Activated B cell treated with CpG ODN at 0.5 μM for 24 hours (primary cell): ENCODE measurements at regions of chr14 and their contacts with region 1.

Region 1: DNA sequence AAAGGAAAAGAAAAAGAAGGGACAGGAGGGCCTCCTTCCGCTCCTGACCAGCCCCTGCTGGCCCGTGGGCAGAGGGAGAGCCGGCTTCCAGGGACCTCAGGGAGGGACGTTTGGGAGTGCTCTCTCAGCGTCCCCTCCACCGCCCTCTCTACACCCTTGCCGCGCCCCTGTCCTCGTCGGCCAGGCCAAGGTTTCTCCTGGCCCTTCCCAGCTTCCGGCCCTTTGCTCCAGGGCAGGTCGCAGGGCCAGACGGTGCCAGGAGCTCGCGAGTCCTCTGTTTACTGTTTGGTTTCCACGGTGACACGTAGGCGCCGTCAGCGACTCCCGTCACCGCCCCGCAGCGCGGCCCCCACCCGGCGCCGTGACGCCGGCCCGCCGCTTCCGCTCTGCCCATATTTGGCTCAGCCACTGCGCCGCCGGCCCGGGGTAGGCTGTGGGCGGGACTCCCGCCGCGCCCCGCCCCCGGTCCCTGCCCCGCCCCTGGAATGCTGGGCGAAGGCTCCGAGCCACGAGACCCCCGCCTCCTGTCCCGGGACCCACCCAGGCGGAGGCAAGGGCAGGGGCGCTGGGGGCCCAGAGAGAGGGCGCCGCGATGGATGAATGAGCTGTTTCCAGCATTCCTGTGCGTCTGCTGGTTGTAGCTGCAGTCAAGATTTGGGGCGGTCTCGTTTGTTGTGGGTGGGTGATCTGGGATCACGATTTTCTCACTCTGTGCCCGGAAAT is 15.5 kb downstream of the FOS start:
- DNase-seq: peak; percentile 96
- ATAC-seq: peak; percentile 85
- H3K4me3 Mint-ChIP-seq: peak overlapping the region; percentile 95
- H3K27ac Mint-ChIP-seq: peak overlapping the region; percentile 88
- H3K4me1 Mint-ChIP-seq: peaks cover 21% of the 10 kb centered on the region
- H3K27me3 Mint-ChIP-seq: peaks cover 6% of the 10 kb centered on the region
- CTCF ChIP-seq: no peak

Region 2: GRCh38 chr14:74302634-74303577 is 991.2 kb before region 1 on chr14 and contains the start of gene ABCD4:
- CTCF ChIA-PET with region 1: no interaction called
- POLR2A ChIA-PET with region 1: no interaction called
- intact Hi-C with region 1: loop called (anchors 10 kb)
- DNase-seq: peak; percentile 84
- ATAC-seq: peak; percentile 97
- H3K4me3 Mint-ChIP-seq: peak within 1 kb of the TSS; percentile 96
- H3K27ac Mint-ChIP-seq: peak within 1 kb of the TSS; percentile 94
- H3K4me1 Mint-ChIP-seq: peaks cover 26% of the 10 kb centered on the region
- H3K27me3 Mint-ChIP-seq: no peaks in the 10 kb centered on the region
- CTCF ChIP-seq: no peak
- total RNA-seq, gene ABCD4: 58.2 and 78.4 TPM in 2 replicates

Region 3: GRCh38 chr14:75132382-75133086 is 161.5 kb before region 1 on chr14:
- CTCF ChIA-PET with region 1: interaction called, 19 read pairs
- POLR2A ChIA-PET with region 1: interaction called, 5 read pairs
- intact Hi-C with region 1: loop called (anchors 1 kb)
- DNase-seq: no peak
- ATAC-seq: peak; percentile 87
- H3K4me3 Mint-ChIP-seq: no peak overlapping the region
- H3K27ac Mint-ChIP-seq: no peak overlapping the region
- H3K4me1 Mint-ChIP-seq: peaks cover 16% of the 10 kb centered on the region
- H3K27me3 Mint-ChIP-seq: no peaks in the 10 kb centered on the region
- CTCF ChIP-seq: peak; percentile 51

Region 4: DNA sequence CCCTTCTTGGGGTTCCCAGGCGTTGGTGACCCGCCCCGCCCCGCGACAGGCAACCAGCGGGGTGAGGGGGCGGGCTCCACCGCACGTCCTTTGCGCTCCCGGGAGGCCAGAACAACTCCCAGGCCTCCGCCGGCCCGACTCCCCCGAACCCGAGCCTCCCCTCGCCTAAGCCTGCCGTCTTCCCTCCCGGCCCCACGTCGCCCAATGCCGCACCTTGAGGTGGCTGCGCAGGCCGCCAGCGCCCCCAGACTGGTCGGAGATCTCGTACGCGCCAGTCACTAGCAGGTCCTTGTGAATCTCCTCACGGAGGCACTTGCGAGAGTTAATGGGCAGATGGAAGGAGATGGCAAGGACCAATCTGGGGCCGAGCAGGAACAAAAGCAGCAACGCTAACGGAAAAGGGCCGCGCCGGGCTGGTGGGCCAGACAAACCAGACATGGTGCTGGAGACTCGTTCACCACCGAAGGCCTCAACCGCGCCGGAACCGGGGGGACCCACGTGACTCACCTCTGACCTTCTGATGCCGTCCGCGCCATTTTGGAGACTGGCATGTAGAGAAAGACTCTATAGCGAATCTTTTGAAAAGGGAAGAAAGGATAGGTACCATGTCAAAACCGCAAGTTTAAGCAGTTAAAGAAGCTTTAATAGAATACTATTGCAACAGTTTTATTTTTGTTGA is 117.8 kb before region 1 on chr14 and contains the start of gene TMED10:
- CTCF ChIA-PET with region 1: interaction called, 4 read pairs
- POLR2A ChIA-PET with region 1: interaction called, 5 read pairs
- intact Hi-C with region 1: loop called (anchors 1 kb)
- DNase-seq: peak; percentile 79
- ATAC-seq: peak; percentile 73
- H3K4me3 Mint-ChIP-seq: peak within 1 kb of the TSS; percentile 97
- H3K27ac Mint-ChIP-seq: peak within 1 kb of the TSS; percentile 99
- H3K4me1 Mint-ChIP-seq: peaks cover 32% of the 10 kb centered on the region
- H3K27me3 Mint-ChIP-seq: no peaks in the 10 kb centered on the region
- CTCF ChIP-seq: no peak
- total RNA-seq, gene TMED10: 124 and 130 TPM in 2 replicates

Region 5: DNA sequence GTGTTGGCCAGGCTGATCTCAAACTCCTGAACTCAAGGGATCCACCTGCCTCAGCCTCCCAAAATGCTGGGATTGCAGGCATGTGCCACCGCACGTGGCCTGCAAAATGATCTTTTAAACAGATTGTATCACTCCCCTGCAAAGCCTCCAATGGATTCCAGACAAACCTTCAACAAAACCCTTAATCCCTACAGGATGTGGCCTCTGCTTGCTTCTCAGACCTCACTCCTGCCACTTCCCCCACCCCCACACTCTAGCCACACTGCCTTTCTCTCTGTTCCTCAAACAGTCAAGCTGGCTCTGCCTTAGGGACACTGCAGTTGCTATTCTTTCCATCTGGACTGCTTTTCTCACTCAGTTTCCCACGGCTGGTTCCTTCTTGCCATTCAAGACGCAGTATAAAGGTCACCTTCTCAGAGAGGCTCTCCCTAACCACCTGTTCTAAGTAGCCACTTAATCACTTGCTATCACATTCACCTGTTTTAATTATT is 70.4 kb before region 1 on chr14:
- CTCF ChIA-PET with region 1: no interaction called
- POLR2A ChIA-PET with region 1: no interaction called
- intact Hi-C with region 1: loop called (anchors 2 kb)
- DNase-seq: no peak
- ATAC-seq: peak; percentile 55
- H3K4me3 Mint-ChIP-seq: peak overlapping the region; percentile 50
- H3K27ac Mint-ChIP-seq: peak overlapping the region; percentile 36
- H3K4me1 Mint-ChIP-seq: peaks cover 43% of the 10 kb centered on the region
- H3K27me3 Mint-ChIP-seq: no peaks in the 10 kb centered on the region
- CTCF ChIP-seq: no peak

Region 6: DNA sequence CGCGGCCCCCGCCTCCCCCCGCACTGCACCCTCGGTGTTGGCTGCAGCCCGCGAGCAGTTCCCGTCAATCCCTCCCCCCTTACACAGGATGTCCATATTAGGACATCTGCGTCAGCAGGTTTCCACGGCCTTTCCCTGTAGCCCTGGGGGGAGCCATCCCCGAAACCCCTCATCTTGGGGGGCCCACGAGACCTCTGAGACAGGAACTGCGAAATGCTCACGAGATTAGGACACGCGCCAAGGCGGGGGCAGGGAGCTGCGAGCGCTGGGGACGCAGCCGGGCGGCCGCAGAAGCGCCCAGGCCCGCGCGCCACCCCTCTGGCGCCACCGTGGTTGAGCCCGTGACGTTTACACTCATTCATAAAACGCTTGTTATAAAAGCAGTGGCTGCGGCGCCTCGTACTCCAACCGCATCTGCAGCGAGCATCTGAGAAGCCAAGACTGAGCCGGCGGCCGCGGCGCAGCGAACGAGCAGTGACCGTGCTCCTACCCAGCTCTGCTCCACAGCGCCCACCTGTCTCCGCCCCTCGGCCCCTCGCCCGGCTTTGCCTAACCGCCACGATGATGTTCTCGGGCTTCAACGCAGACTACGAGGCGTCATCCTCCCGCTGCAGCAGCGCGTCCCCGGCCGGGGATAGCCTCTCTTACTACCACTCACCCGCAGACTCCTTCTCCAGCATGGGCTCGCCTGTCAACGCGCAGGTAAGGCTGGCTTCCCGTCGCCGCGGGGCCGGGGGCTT is 15.5 kb before region 1 on chr14 and contains the start of gene FOS:
- CTCF ChIA-PET with region 1: interaction called, 3 read pairs
- POLR2A ChIA-PET with region 1: interaction called, 5 read pairs
- intact Hi-C with region 1: loop called (anchors 1 kb)
- DNase-seq: peak; percentile 88
- ATAC-seq: peak; percentile 70
- H3K4me3 Mint-ChIP-seq: peak within 1 kb of the TSS; percentile 94
- H3K27ac Mint-ChIP-seq: peak within 1 kb of the TSS; percentile 94
- H3K4me1 Mint-ChIP-seq: peaks cover 64% of the 10 kb centered on the region
- H3K27me3 Mint-ChIP-seq: peaks cover 18% of the 10 kb centered on the region
- CTCF ChIP-seq: no peak
- total RNA-seq, gene FOS: 27.1 and 37.8 TPM in 2 replicates